K562 (cell line): ENCODE measurements at regions of chr22 and their contacts with region 1.

Region 1: DNA sequence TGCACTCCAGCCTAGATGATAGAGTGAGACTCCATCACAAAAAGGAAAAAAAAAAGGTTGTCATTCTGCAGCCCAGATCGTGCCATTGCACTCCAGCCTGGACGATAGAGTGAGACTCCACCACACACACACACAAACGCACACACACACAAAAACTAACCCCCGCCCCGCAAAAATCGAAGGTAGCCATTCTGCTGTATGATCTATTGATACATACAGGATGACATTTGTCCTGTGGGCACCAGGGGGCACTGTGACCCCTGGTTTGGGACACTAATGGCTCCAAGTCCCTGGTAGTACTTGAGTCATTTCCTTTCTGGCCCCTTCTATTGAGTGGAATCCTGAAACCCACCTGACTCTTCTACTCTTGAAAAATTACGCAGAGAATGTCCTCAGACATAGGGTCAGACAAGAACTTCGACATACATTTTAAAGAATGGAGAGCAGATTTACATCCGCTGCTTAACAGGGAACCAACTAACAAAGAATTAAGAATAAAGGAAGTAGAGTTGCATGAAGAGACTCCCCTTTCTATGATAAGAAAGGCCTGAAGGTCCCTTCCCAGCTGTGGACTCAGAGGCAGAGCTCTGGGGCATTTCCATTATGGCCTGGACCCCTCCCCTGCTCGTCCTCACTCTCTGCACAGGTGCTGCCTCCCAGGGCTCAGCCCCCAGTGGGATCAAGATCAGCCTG is 35.0 kb upstream of the PRAME start:
- DNase-seq: peak; percentile 94 to 100 (median 98)
- ATAC-seq: peak; percentile 95
- H3K4me3 ChIP-seq: no peak overlapping the region
- H3K27ac ChIP-seq: no peak overlapping the region
- H3K4me1 ChIP-seq: no peaks in the 10 kb centered on the region
- H3K27me3 ChIP-seq: peaks cover 31 to 47% of the 10 kb centered on the region in 2 experiments; a peak in 4 of 5 replicates
- CTCF ChIP-seq: no peak
- EP300 ChIP-seq: no peak
- POLR2A ChIP-seq: no peak
- RAD21 ChIP-seq: no peak

Region 2: DNA sequence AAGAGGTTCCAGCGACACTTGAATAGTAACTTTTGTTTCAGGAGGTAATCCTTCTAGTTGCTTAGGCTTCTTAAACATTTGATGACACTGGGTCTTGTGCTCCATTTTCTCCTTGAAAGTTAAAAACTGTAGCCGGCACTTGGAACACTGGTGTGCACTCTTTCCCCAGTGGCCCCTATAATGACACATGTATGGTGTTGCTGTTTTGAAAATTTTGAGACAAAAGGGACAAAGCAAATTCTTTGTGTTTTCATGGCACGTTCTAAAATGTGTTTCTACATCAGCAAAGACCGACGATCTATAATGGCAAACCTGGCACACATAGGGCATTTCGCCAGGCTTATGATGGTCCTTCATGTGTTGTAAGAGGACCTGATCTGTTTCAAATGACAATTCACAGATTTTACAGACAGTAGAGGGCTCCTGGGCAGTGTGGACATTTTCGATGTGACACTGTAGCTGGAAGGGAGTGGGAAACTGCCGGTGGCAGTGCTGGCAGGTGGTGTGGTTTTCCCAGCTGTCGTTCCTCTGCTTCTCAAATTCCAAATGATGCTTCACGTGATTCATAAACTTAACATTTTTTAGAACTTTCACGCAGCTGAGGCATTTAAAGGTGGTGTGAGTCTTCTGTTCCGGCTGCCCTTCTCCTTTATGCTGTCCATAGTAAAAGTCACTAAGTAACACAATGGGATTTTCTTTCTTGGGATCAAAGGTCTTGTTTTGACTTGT is 106.1 kb before region 1 on chr22:
- CTCF ChIA-PET with region 1: no interaction called
- POLR2A ChIA-PET with region 1: interaction called, 11 read pairs
- in situ Hi-C with region 1: no loop called
- intact Hi-C with region 1: no loop called
- DNase-seq: peak in 1 of 4 experiments; percentile 39
- ATAC-seq: no peak
- H3K4me3 ChIP-seq: no peak overlapping the region
- H3K27ac ChIP-seq: no peak overlapping the region
- H3K4me1 ChIP-seq: no peaks in the 10 kb centered on the region
- H3K27me3 ChIP-seq: no peaks in the 10 kb centered on the region
- CTCF ChIP-seq: no peak
- EP300 ChIP-seq: no peak
- POLR2A ChIP-seq: no peak
- RAD21 ChIP-seq: no peak

Region 3: DNA sequence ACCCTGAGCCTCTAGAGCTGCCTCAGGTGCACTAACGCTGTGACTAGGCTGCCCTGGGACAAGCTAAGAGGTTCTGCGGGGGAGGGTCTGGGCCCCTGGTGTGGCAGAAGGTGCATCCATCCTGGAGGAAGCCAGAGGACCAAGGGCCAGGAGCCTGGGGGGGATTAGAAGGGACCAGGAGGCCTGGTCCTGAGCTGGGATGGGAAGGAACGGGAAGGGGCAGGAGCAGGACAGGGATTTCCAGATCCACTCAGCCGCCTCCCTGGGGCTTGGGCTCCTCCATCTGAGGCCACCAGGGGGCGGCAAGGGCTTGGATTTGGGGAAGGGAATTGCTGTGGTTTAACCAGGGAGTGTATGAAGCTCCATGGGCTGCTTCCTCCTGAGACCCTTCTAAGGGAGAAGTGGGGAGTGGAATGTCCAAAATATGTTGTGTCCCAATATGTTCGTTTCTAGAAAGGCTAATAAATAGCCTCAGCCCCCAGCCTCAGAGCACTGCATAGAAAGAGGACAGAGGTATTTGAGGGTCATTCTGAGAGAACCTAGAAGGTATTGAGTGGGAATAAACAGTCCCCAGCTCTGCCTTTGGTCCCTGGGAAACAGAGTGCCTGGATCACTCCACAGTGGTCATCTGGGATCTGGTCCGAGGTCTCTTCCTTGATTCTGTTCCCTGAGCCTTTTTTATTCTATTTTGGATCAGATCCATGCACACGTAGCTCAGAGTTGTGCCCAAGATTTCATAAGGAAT is 17.7 kb before region 1 on chr22:
- CTCF ChIA-PET with region 1: interaction called, 8 read pairs
- POLR2A ChIA-PET with region 1: interaction called, 74 read pairs
- in situ Hi-C with region 1: no loop called
- intact Hi-C with region 1: no loop called
- DNase-seq: peak; percentile 96 to 98 (median 97)
- ATAC-seq: peak; percentile 96
- H3K4me3 ChIP-seq: no peak overlapping the region
- H3K27ac ChIP-seq: no peak overlapping the region
- H3K4me1 ChIP-seq: peaks cover 0 to 14% of the 10 kb centered on the region in 2 experiments; a peak in 3 of 5 replicates
- H3K27me3 ChIP-seq: peaks cover 48 to 60% of the 10 kb centered on the region in 2 experiments
- CTCF ChIP-seq: peak in 1 of 3 experiments; percentile 99; a peak in 2 of 6 replicates
- EP300 ChIP-seq: peak; percentile 75
- POLR2A ChIP-seq: no peak
- RAD21 ChIP-seq: peak in 1 of 2 experiments; percentile 89; a peak in 2 of 4 replicates

Region 4: GRCh38 chr22:22609291-22609690 is 15.2 kb after region 1 on chr22:
- CTCF ChIA-PET with region 1: interaction called, 7 read pairs
- POLR2A ChIA-PET with region 1: interaction called, 23 read pairs
- in situ Hi-C with region 1: no loop called
- intact Hi-C with region 1: no loop called
- DNase-seq: peak in 1 of 4 experiments; percentile 22
- ATAC-seq: peak; percentile 15; the same call in 2 of the 3 replicates
- H3K4me3 ChIP-seq: no peak overlapping the region
- H3K27ac ChIP-seq: no peak overlapping the region
- H3K4me1 ChIP-seq: no peaks in the 10 kb centered on the region
- H3K27me3 ChIP-seq: peaks cover 40 to 44% of the 10 kb centered on the region in 2 experiments
- CTCF ChIP-seq: no peak
- EP300 ChIP-seq: no peak
- POLR2A ChIP-seq: no peak
- RAD21 ChIP-seq: no peak

Region 5: GRCh38 chr22:22687638-22688500 is 93.8 kb after region 1 on chr22:
- CTCF ChIA-PET with region 1: interaction called, 60 read pairs
- POLR2A ChIA-PET with region 1: no interaction called
- in situ Hi-C with region 1: no loop called
- intact Hi-C with region 1: loop called (anchors 1 kb)
- DNase-seq: peak; percentile 90 to 93 (median 91)
- ATAC-seq: peak; percentile 92
- H3K4me3 ChIP-seq: no peak overlapping the region
- H3K27ac ChIP-seq: no peak overlapping the region
- H3K4me1 ChIP-seq: no peaks in the 10 kb centered on the region
- H3K27me3 ChIP-seq: peaks cover 0 to 18% of the 10 kb centered on the region in 2 experiments; a peak in 2 of 5 replicates
- CTCF ChIP-seq: no peak
- EP300 ChIP-seq: no peak
- POLR2A ChIP-seq: no peak
- RAD21 ChIP-seq: no peak

Region 6: DNA sequence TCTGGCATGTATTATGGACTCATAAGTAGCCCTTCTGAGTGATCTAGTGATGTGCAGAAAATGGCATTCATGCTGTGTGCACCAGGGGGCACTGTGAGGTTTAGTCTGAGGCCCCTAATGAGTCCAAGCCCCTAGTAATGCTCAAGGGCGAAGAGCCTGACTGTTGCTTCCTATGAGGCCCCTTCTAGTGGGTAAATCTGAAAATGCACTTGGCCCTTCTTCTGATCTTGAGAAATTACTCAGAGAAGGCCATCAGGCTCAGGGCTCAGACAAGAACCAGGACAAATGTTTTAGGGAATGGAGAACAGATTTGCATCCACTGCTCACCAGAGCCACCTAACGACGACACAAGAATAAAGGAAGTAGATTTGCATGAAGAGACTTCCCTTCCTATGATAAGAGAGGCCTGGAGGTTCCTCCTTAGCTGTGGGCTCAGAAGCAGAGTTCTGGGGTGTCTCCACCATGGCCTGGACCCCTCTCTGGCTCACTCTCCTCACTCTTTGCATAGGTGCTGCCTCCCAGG is 126.2 kb after region 1 on chr22:
- CTCF ChIA-PET with region 1: interaction called, 6 read pairs
- POLR2A ChIA-PET with region 1: no interaction called
- in situ Hi-C with region 1: no loop called
- intact Hi-C with region 1: loop called (anchors 2 kb)
- DNase-seq: peak; percentile 93 to 96 (median 94)
- ATAC-seq: peak; percentile 97
- H3K4me3 ChIP-seq: no peak overlapping the region
- H3K27ac ChIP-seq: no peak overlapping the region
- H3K4me1 ChIP-seq: peaks cover 0 to 25% of the 10 kb centered on the region in 2 experiments; a peak in 3 of 5 replicates
- H3K27me3 ChIP-seq: peaks cover 0 to 12% of the 10 kb centered on the region in 2 experiments; a peak in 2 of 5 replicates
- CTCF ChIP-seq: no peak
- EP300 ChIP-seq: no peak
- POLR2A ChIP-seq: no peak
- RAD21 ChIP-seq: no peak